Ovary (tissue), 10 donors: ENCODE measurements at regions of chr17 and their contacts with region 1.

Region 1: GRCh38 chr17:39132192-39132610 is 19.2 kb downstream of the PLXDC1 start:
- DNase-seq: peak; percentile 60 to 80 (median 71)
- H3K4me3 ChIP-seq: no peak overlapping the region
- H3K27ac ChIP-seq: peak overlapping the region in 1 of 2 donors; percentile 27
- H3K4me1 ChIP-seq: no peaks in the 10 kb centered on the region
- H3K27me3 ChIP-seq: no peaks in the 10 kb centered on the region
- CTCF ChIP-seq: no peak
- EP300 ChIP-seq: no peak
- POLR2A ChIP-seq: no peak

Region 2: DNA sequence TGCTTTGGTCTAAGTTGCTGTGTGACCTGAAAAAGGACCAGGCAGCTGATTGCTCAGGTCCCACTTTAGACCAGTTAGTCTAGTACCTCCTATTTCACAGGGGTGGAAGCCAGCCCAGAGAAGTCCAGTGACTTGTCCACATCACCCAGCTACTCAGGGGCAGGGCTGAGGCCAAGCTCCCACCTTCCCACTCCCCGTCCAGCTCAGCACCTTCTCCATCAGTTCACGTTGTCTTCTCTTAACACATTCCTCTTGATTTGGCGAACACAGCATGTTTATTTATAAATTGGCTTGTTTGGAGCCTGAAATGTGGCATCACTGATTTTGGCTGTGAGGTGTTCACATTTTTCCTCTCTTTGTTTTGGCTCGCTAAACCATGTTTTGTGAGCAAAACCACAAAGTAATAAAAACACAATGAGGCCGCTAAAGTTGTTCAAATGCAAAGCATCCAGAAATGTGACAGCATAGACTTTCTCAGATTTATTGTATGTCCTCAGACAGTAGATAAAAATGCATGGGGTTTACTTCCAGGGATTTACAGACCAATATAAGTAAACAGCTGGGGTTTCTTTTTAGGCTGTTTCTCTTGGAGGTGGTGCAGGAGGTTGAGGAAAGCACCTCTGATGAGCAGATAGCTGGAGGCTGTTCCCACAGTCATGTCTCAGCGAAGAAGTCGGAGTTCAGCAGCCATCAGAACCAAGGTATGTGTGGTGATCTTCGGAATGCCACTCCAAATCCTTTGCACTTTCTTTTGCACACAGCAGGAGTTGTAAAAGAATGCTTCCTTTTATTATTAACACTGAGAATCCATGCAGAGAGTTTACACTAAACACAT is 69.1 kb before region 1 on chr17:
- intact Hi-C with region 1: loop called in 1 of 4 experiments (anchors 2 kb)
- DNase-seq: peak in 1 of 5 donors; percentile 11
- H3K4me3 ChIP-seq: no peak overlapping the region
- H3K27ac ChIP-seq: no peak overlapping the region
- H3K4me1 ChIP-seq: no peaks in the 10 kb centered on the region
- H3K27me3 ChIP-seq: no peaks in the 10 kb centered on the region
- CTCF ChIP-seq: no peak
- EP300 ChIP-seq: no peak
- POLR2A ChIP-seq: no peak